Calu3 (cell line): ENCODE measurements at regions of chr10 and their contacts with region 1.

Region 1: GRCh38 chr10:62816331-62817120 is at the start of gene EGR2:
- DNase-seq: peak; percentile 96
- H3K4me3 Mint-ChIP-seq: peak within 1 kb of the TSS; percentile 81
- H3K27ac Mint-ChIP-seq: peak within 1 kb of the TSS; percentile 56
- H3K4me1 Mint-ChIP-seq: peaks cover 10% of the 10 kb centered on the region
- H3K27me3 Mint-ChIP-seq: peaks cover 72% of the 10 kb centered on the region
- CTCF ChIP-seq: no peak
- total RNA-seq, gene EGR2: 0.68 and 1.1 TPM in 2 replicates

Region 2: GRCh38 chr10:62437696-62438095 is 378.8 kb before region 1 on chr10:
- CTCF ChIA-PET with region 1: interaction called, 3 read pairs
- intact Hi-C with region 1: loop called (anchors 5 kb)
- DNase-seq: peak; percentile 59
- H3K4me3 Mint-ChIP-seq: no peak overlapping the region
- H3K27ac Mint-ChIP-seq: no peak overlapping the region
- H3K4me1 Mint-ChIP-seq: peaks cover 32% of the 10 kb centered on the region
- H3K27me3 Mint-ChIP-seq: no peaks in the 10 kb centered on the region
- CTCF ChIP-seq: peak; percentile 70

Region 3: GRCh38 chr10:62594093-62594520 is 222.4 kb before region 1 on chr10:
- CTCF ChIA-PET with region 1: interaction called, 6 read pairs
- intact Hi-C with region 1: loop called (anchors 5 kb)
- DNase-seq: peak; percentile 77
- H3K4me3 Mint-ChIP-seq: no peak overlapping the region
- H3K27ac Mint-ChIP-seq: no peak overlapping the region
- H3K4me1 Mint-ChIP-seq: no peaks in the 10 kb centered on the region
- H3K27me3 Mint-ChIP-seq: no peaks in the 10 kb centered on the region
- CTCF ChIP-seq: peak; percentile 94

Region 4: GRCh38 chr10:62732841-62733653 is 83.5 kb before region 1 on chr10:
- CTCF ChIA-PET with region 1: interaction called, 11 read pairs
- intact Hi-C with region 1: no loop called
- DNase-seq: peak; percentile 62
- H3K4me3 Mint-ChIP-seq: peak overlapping the region; percentile 30
- H3K27ac Mint-ChIP-seq: no peak overlapping the region
- H3K4me1 Mint-ChIP-seq: peaks cover 3% of the 10 kb centered on the region
- H3K27me3 Mint-ChIP-seq: no peaks in the 10 kb centered on the region
- CTCF ChIP-seq: no peak

Region 5: GRCh38 chr10:63083904-63084689 is 267.6 kb after region 1 on chr10:
- CTCF ChIA-PET with region 1: interaction called, 25 read pairs
- intact Hi-C with region 1: loop called (anchors 1 kb)
- DNase-seq: peak; percentile 36
- H3K4me3 Mint-ChIP-seq: no peak overlapping the region
- H3K27ac Mint-ChIP-seq: no peak overlapping the region
- H3K4me1 Mint-ChIP-seq: no peaks in the 10 kb centered on the region
- H3K27me3 Mint-ChIP-seq: peaks cover 19% of the 10 kb centered on the region
- CTCF ChIP-seq: peak; percentile 68